Aorta (tissue), 5 donors: ENCODE measurements at regions of chr20 and their contacts with region 1.

Region 1: DNA sequence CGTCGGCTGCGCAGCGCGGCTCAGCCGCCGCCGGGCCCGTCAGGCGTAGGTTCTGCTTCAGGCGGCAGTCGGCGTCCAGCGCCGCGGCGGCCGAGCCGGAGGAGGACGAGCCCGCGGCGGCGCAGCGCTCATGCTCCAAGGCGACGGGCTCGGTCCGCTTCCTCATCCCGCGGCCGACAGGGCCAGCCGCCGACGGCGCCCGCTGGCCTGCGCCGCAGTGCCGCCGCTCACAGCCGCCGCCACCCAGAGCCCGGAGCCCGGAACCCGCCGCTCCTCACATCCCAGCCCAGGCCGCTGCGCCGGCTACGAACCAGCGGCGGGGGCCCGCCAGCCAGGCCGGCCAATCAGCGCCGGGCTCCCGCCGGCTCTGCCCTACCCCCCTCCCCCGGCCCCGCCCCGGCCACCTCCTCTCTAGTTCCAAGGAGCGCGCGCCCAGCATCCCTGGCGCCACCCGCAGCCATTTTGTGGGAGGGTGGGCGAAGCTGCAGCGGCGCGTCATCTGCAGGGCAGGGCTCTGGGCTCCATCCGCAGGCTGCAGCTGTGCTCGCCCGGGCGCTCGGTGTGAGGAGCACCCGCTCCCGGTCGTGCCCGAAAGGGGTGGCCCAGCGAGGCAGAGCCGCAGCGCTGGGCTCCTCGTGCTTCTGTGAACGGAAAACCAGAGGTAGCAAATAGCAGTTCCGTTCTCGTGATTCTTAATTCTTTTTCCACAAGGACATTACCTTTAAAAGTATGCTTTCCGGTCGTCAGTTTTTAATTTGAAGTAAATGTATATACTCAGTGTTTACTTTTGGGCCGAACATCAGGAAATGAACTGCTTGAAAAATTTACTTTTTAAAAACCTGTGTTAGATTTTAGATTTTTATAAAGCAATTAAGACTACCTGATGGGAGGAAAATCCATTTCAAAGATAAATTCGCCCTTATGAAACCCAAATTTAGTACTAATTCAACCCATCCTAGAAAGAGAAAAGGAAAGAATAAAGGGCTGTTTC is at the start of gene ABHD12:
- DNase-seq: peak; percentile 98 to 99
- ATAC-seq: peak; percentile 99
- H3K4me3 ChIP-seq: peak within 1 kb of the TSS; percentile 70 to 76
- H3K27ac ChIP-seq: peak within 1 kb of the TSS in 1 of 2 donors; percentile 81
- H3K4me1 ChIP-seq: no peaks in the 10 kb centered on the region
- H3K27me3 ChIP-seq: no peaks in the 10 kb centered on the region
- total RNA-seq, gene ABHD12: 31.6 to 32.3 TPM

Region 2: GRCh38 chr20:25065625-25066338 is 325.1 kb before region 1 on chr20:
- intact Hi-C with region 1: loop called in 1 of 2 experiments (anchors 10 kb)
- DNase-seq: peak; percentile 68 to 85
- ATAC-seq: peak; percentile 83
- H3K4me3 ChIP-seq: no peak overlapping the region
- H3K27ac ChIP-seq: no peak overlapping the region
- H3K4me1 ChIP-seq: no peaks in the 10 kb centered on the region
- H3K27me3 ChIP-seq: no peaks in the 10 kb centered on the region

Region 3: GRCh38 chr20:25195014-25195961 is 195.5 kb before region 1 on chr20 and contains the start of gene ENTPD6:
- intact Hi-C with region 1: loop called in 1 of 2 experiments (anchors 10 kb)
- DNase-seq: peak; percentile 95 to 97
- ATAC-seq: peak; percentile 97
- H3K4me3 ChIP-seq: peak within 1 kb of the TSS; percentile 69 to 77
- H3K27ac ChIP-seq: peak within 1 kb of the TSS in 1 of 2 donors; percentile 43
- H3K4me1 ChIP-seq: peaks cover 0 to 3% of the 10 kb centered on the region in 2 donors
- H3K27me3 ChIP-seq: no peaks in the 10 kb centered on the region
- total RNA-seq, gene ENTPD6: 68.8 to 69.8 TPM

Region 4: GRCh38 chr20:25336561-25337422 is 54.0 kb before region 1 on chr20:
- intact Hi-C with region 1: no loop called
- DNase-seq: no peak
- ATAC-seq: no peak
- H3K4me3 ChIP-seq: no peak overlapping the region
- H3K27ac ChIP-seq: no peak overlapping the region
- H3K4me1 ChIP-seq: no peaks in the 10 kb centered on the region
- H3K27me3 ChIP-seq: no peaks in the 10 kb centered on the region

Region 5: DNA sequence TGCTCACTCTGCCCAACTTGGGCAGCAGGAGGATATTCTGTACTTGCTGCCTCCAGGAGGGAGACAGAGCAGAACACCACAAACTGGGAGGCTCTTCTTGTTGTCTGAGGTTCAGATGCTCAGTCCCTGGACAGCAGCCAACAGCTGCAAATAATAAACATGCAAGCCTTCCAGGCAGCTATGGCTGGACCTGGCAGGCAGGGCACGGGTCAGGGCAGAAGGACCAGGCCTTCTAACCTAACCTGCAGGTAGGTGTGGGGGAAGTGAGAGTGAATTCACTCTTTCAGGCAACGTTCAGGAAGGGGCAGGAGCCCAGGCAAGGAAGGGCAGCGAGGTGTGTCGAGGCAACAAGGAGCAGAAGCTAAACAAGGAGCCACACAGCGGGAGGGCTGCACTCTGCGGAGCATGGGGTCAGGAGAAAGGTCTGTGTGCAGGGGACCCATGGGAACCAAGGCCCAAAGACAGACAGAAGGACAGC is 163.0 kb after region 1 on chr20:
- intact Hi-C with region 1: no loop called
- DNase-seq: no peak
- ATAC-seq: peak; percentile 49
- H3K4me3 ChIP-seq: no peak overlapping the region
- H3K27ac ChIP-seq: no peak overlapping the region
- H3K4me1 ChIP-seq: peaks cover 0 to 3% of the 10 kb centered on the region in 2 donors
- H3K27me3 ChIP-seq: no peaks in the 10 kb centered on the region

Region 6: DNA sequence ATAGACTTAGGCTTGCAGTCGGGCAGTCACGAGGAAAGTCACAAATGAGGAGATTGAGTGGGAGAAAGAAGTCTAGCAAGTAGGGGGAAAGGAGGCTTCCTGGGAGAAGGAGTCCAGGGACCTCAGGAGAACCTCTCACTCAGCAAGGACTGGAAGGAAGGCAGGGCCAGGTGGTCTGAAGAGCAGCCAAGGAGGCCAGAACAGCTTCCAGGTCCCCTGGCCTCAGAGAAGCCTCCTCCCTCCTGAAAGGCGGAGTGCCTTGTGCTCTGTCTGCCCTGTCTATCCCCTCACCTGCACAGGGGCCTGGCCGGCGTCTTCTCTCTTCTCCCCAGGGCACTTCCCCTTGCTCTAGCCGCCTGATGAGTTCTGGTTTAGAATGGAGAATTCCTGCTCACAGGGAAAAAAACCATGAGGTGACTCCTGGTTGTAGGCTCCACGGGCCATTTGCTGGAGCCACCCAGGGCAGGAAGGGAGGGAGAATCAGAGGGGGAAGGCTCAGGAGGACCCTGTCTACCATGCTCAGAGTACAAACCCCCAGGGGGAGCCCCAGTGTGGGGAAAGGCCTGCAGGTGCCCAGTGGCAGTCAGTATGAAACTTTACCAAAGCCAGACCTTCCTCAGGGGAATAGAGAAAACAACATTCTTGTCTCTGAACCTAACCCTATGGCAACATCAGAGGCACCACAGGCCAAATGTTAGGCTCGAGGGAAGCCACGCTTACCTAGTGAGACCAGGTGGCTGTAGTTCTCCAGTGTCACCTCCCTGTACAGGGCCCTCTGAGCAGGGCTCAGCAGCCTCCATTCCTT is 294.6 kb after region 1 on chr20:
- intact Hi-C with region 1: no loop called
- DNase-seq: no peak
- ATAC-seq: no peak
- H3K4me3 ChIP-seq: no peak overlapping the region
- H3K27ac ChIP-seq: no peak overlapping the region
- H3K4me1 ChIP-seq: no peaks in the 10 kb centered on the region
- H3K27me3 ChIP-seq: no peaks in the 10 kb centered on the region